ENCODE measurements at regions of chr20 and their contacts with region 1.

Region 1: GRCh38 chr20:62668441-62669027 is 26.2 kb downstream of the SLCO4A1 start:
- DNase-seq: peak; percentile 75 to 76
- H3K4me3 ChIP-seq: no peak overlapping the region
- H3K27ac ChIP-seq: no peak overlapping the region
- H3K4me1 ChIP-seq: no peaks in the 10 kb centered on the region
- H3K27me3 ChIP-seq: no peaks in the 10 kb centered on the region
- CTCF ChIP-seq: peak; percentile 51 to 92 (median 80)
- POLR2A ChIP-seq: no peak

Region 2: GRCh38 chr20:62793912-62794724 is 125.6 kb after region 1 on chr20:
- intact Hi-C with region 1: loop called (anchors 2 kb)
- DNase-seq: peak; percentile 97 to 98
- H3K4me3 ChIP-seq: peak overlapping the region in 1 of 3 donors; percentile 50
- H3K27ac ChIP-seq: peak overlapping the region; percentile 76 to 94 (median 78)
- H3K4me1 ChIP-seq: peaks cover 16 to 25% of the 10 kb centered on the region in 2 donors
- H3K27me3 ChIP-seq: no peaks in the 10 kb centered on the region
- CTCF ChIP-seq: peak in 1 of 6 experiments; percentile 12
- POLR2A ChIP-seq: peak in 1 of 2 donors; percentile 89

Region 3: DNA sequence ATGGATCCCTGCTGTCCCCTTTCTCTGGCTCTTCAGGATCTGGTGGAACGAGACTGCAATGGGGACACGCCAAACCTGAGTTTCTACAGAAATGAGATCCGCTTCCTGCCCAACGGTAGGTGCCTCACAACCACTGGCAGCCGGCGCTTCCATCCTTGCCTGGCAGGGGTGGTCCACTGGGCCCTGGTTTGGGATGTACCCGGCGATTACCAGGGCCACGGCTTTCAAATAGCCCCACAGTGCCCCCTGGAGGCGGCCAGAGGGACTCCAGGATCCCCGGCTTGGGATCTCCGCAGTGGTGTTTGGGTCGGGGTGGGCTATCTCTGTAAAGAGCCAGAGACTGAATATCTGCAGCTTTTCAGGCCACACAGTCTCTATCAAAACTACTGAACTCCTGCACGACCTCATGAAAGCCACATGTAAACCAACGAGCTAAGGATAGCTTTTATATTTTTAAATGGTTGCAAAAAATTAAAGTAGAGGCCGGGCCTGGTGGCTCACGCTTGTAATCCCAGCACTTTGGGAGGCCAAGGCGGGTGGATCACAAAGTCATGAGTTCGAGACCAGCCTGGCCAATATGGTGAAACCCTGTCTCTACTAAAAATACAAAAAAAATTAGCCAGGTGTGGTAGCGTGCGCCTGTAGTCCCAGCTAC is 139.8 kb after region 1 on chr20:
- intact Hi-C with region 1: loop called (anchors 5 kb)
- DNase-seq: peak; percentile 57 to 65
- H3K4me3 ChIP-seq: no peak overlapping the region
- H3K27ac ChIP-seq: no peak overlapping the region
- H3K4me1 ChIP-seq: peaks cover 8 to 23% of the 10 kb centered on the region in 2 donors
- H3K27me3 ChIP-seq: no peaks in the 10 kb centered on the region
- CTCF ChIP-seq: peak; percentile 69 to 95 (median 78)
- POLR2A ChIP-seq: no peak

Measured in thyroid gland (tissue), 4 donors.